GM12878 (cell line): ENCODE measurements at regions of chr2 and their contacts with region 1.

Region 1: GRCh38 chr2:96145036-96145847 is at the start of gene DUSP2:
- DNase-seq: peak; percentile 85
- ATAC-seq: peak; percentile 62
- H3K4me3 ChIP-seq: peak within 1 kb of the TSS; percentile 92
- H3K27ac ChIP-seq: peak within 1 kb of the TSS; percentile 89
- H3K4me1 ChIP-seq: peaks cover 45% of the 10 kb centered on the region
- H3K27me3 ChIP-seq: no peaks in the 10 kb centered on the region
- CTCF ChIP-seq: no peak
- EP300 ChIP-seq: peak in 1 of 2 experiments; percentile 36; a peak in 3 of 4 replicates
- POLR2A ChIP-seq: no peak
- RAD21 ChIP-seq: 0 out of 2 replicates have a peak, but pooled peaks have one; percentile 22
- polyA plus RNA-seq, gene DUSP2: 9.7 to 34.6 TPM

Region 2: DNA sequence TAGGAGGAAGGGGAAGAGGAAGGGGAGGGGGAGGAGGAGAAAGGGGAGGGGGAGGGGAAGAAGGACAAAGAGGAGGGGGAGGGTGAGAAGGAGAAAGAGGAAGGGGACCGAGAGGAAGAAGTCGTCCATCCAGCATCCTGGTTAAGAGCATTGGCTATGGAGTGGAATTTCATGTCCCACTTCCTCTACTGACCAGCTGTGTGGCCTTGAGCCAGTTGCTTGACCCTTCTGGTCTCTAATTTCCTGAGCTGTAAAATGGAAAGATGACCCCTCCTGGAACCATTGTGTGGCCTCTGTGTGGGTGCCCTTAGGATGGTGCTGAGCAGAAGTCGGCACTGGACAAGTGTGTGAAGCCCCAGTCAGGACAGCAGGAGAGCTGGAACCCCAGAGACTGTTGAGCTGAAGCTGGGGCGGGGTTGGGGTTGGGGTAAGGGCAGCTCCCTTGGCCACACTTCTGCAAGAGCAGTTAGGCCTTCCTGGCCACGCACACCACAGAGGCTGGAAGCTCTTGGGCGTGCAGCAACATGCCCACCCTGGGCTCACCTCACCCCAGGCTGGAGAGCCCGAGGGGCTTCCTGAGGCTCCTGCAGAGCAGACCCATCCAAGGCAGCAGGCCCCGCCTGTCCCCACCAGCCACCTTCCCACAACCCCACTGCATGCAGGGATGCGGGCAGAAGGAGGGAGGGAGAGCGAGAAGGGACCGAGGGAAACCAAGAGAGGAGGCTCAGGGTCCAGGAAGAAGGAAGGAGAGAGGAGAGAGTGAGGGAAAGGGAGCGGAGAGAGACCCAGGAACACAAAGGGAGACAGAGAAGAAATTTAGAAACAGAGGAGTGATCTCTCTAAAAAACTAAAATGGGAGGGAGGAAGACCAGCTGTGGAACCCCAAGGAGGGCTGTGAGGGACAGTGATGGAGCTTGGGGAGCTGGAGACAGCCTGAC is 45.1 kb before region 1 on chr2:
- CTCF ChIA-PET with region 1: no interaction called
- POLR2A ChIA-PET with region 1: no interaction called
- RAD21 ChIA-PET with region 1: no interaction called
- SMC1A ChIA-PET with region 1: no interaction called
- in situ Hi-C with region 1: no loop called
- intact Hi-C with region 1: no loop called
- DNase-seq: no peak
- ATAC-seq: peak; percentile 17
- H3K4me3 ChIP-seq: no peak overlapping the region
- H3K27ac ChIP-seq: no peak overlapping the region
- H3K4me1 ChIP-seq: no peaks in the 10 kb centered on the region
- H3K27me3 ChIP-seq: no peaks in the 10 kb centered on the region
- CTCF ChIP-seq: no peak
- EP300 ChIP-seq: no peak
- POLR2A ChIP-seq: no peak
- RAD21 ChIP-seq: no peak

Region 3: GRCh38 chr2:96157651-96158553 is 12.7 kb after region 1 on chr2:
- CTCF ChIA-PET with region 1: interaction called, 68 read pairs
- POLR2A ChIA-PET with region 1: interaction called, 161 read pairs
- RAD21 ChIA-PET with region 1: interaction called, 182 read pairs
- SMC1A ChIA-PET with region 1: interaction called, 139 read pairs
- in situ Hi-C with region 1: no loop called
- intact Hi-C with region 1: loop called (anchors 1 kb)
- DNase-seq: peak; percentile 76
- ATAC-seq: peak; percentile 80
- H3K4me3 ChIP-seq: peak overlapping the region; percentile 21; the same call in 1 of the 2 replicates
- H3K27ac ChIP-seq: peak overlapping the region; percentile 95
- H3K4me1 ChIP-seq: peaks cover 60% of the 10 kb centered on the region
- H3K27me3 ChIP-seq: no peaks in the 10 kb centered on the region
- CTCF ChIP-seq: no peak
- EP300 ChIP-seq: peak; percentile 93 to 95
- POLR2A ChIP-seq: peak; percentile 80
- RAD21 ChIP-seq: peak; percentile 22; the same call in 1 of the 2 replicates

Region 4: GRCh38 chr2:96164459-96165184 is 19.4 kb after region 1 on chr2:
- CTCF ChIA-PET with region 1: interaction called, 535 read pairs
- POLR2A ChIA-PET with region 1: interaction called, 161 read pairs
- RAD21 ChIA-PET with region 1: interaction called, 182 read pairs
- SMC1A ChIA-PET with region 1: interaction called, 338 read pairs
- in situ Hi-C with region 1: no loop called
- intact Hi-C with region 1: loop called (anchors 1 kb)
- DNase-seq: peak; percentile 96
- ATAC-seq: peak; percentile 85
- H3K4me3 ChIP-seq: peak overlapping the region; percentile 65
- H3K27ac ChIP-seq: peak overlapping the region; percentile 100
- H3K4me1 ChIP-seq: peaks cover 51% of the 10 kb centered on the region
- H3K27me3 ChIP-seq: no peaks in the 10 kb centered on the region
- CTCF ChIP-seq: peak in 1 of 3 experiments; percentile 11; a peak in 2 of 6 replicates
- EP300 ChIP-seq: no peak; a peak in 1 of 4 replicates
- POLR2A ChIP-seq: peak; percentile 86
- RAD21 ChIP-seq: peak; percentile 16; the same call in 1 of the 2 replicates

Region 5: DNA sequence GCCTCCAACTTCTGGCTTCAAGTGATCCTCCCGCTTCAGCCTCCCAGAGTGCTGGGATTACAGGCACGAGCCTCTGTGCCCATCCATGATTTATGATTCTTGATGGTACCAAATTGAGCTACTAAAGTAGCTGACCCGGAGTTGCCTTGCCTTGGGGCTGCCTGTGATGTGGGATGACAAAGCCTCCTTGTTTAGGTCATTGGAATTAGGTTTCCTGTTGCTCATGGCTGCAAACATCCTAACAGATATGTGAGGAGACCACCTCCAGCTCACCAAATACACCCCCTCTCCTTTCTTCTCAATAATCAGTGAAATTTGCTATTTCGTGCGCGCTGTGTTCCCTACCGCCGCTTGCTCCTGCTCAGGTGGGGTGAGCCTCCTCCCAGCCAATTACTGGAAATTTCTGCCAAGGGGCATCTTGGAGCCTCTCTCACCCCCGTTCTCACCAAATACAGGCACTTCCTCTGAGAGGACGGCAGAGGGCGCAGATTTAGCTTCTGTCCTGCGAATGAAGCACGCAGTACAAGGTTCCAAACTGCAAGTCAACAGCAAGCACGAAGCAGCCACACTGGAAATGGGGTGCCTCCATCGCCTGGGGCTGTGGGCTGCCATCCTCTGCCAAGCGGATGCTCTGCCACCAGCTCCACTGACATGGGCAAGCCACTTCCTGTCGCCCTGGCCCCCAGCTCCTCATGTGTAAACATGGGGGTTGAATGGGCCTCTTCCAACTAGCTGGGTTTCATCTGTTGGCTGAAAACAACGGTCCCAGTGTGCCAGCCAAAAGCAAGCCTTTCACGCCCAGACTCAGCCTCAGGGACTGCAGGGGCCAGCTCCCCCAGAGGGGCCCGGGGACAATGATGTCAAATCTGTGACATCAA is 262.0 kb after region 1 on chr2:
- CTCF ChIA-PET with region 1: no interaction called
- POLR2A ChIA-PET with region 1: no interaction called
- RAD21 ChIA-PET with region 1: no interaction called
- SMC1A ChIA-PET with region 1: no interaction called
- in situ Hi-C with region 1: no loop called
- intact Hi-C with region 1: no loop called
- DNase-seq: peak; percentile 26
- ATAC-seq: peak; percentile 95
- H3K4me3 ChIP-seq: no peak overlapping the region
- H3K27ac ChIP-seq: no peak overlapping the region
- H3K4me1 ChIP-seq: peaks cover 6% of the 10 kb centered on the region
- H3K27me3 ChIP-seq: no peaks in the 10 kb centered on the region
- CTCF ChIP-seq: peak; percentile 86 to 90 (median 87)
- EP300 ChIP-seq: no peak
- POLR2A ChIP-seq: no peak
- RAD21 ChIP-seq: peak; percentile 84

Region 6: GRCh38 chr2:96423828-96424227 is 278.6 kb after region 1 on chr2:
- CTCF ChIA-PET with region 1: no interaction called
- POLR2A ChIA-PET with region 1: no interaction called
- RAD21 ChIA-PET with region 1: no interaction called
- SMC1A ChIA-PET with region 1: no interaction called
- in situ Hi-C with region 1: no loop called
- intact Hi-C with region 1: no loop called
- DNase-seq: no peak
- ATAC-seq: no peak
- H3K4me3 ChIP-seq: no peak overlapping the region
- H3K27ac ChIP-seq: no peak overlapping the region
- H3K4me1 ChIP-seq: no peaks in the 10 kb centered on the region
- H3K27me3 ChIP-seq: no peaks in the 10 kb centered on the region; a peak in 1 of 4 replicates
- CTCF ChIP-seq: no peak
- EP300 ChIP-seq: no peak
- POLR2A ChIP-seq: no peak
- RAD21 ChIP-seq: no peak

Region 7: GRCh38 chr2:96739633-96740428 is 594.6 kb after region 1 on chr2 and contains the start of gene LMAN2L:
- CTCF ChIA-PET with region 1: no interaction called
- POLR2A ChIA-PET with region 1: no interaction called
- RAD21 ChIA-PET with region 1: no interaction called
- SMC1A ChIA-PET with region 1: no interaction called
- in situ Hi-C with region 1: no loop called
- intact Hi-C with region 1: no loop called
- DNase-seq: peak; percentile 86
- ATAC-seq: peak; percentile 100
- H3K4me3 ChIP-seq: peak within 1 kb of the TSS; percentile 84
- H3K27ac ChIP-seq: peak within 1 kb of the TSS; percentile 56
- H3K4me1 ChIP-seq: no peaks in the 10 kb centered on the region
- H3K27me3 ChIP-seq: no peaks in the 10 kb centered on the region
- CTCF ChIP-seq: no peak
- EP300 ChIP-seq: no peak
- POLR2A ChIP-seq: peak; percentile 85
- RAD21 ChIP-seq: no peak
- polyA plus RNA-seq, gene LMAN2L: 12.1 to 15.1 TPM